ENCODE measurements at regions of chr5 and their contacts with region 1.

Region 1: GRCh38 chr5:170183816-170184687 is 48.7 kb upstream of the C5orf58 start:
- DNase-seq: peak; percentile 76
- H3K4me3 Mint-ChIP-seq: no peak overlapping the region
- H3K27ac Mint-ChIP-seq: no peak overlapping the region
- H3K4me1 Mint-ChIP-seq: no peaks in the 10 kb centered on the region
- H3K27me3 Mint-ChIP-seq: no peaks in the 10 kb centered on the region

Region 2: GRCh38 chr5:168987543-168988300 is 1196.3 kb before region 1 on chr5:
- CTCF ChIA-PET with region 1: no interaction called
- intact Hi-C with region 1: loop called (anchors 10 kb)
- DNase-seq: peak; percentile 77
- H3K4me3 Mint-ChIP-seq: no peak overlapping the region
- H3K27ac Mint-ChIP-seq: no peak overlapping the region
- H3K4me1 Mint-ChIP-seq: no peaks in the 10 kb centered on the region
- H3K27me3 Mint-ChIP-seq: peaks cover 6% of the 10 kb centered on the region

Region 3: GRCh38 chr5:170100066-170100943 is 83.7 kb before region 1 on chr5:
- CTCF ChIA-PET with region 1: interaction called, 32 read pairs
- intact Hi-C with region 1: loop called (anchors 1 kb)
- DNase-seq: peak; percentile 88
- H3K4me3 Mint-ChIP-seq: no peak overlapping the region
- H3K27ac Mint-ChIP-seq: no peak overlapping the region
- H3K4me1 Mint-ChIP-seq: no peaks in the 10 kb centered on the region
- H3K27me3 Mint-ChIP-seq: peaks cover 2% of the 10 kb centered on the region

Region 4: GRCh38 chr5:170173235-170173634 is 10.8 kb before region 1 on chr5:
- CTCF ChIA-PET with region 1: interaction called, 10 read pairs
- intact Hi-C with region 1: no loop called
- DNase-seq: no peak
- H3K4me3 Mint-ChIP-seq: no peak overlapping the region
- H3K27ac Mint-ChIP-seq: no peak overlapping the region
- H3K4me1 Mint-ChIP-seq: no peaks in the 10 kb centered on the region
- H3K27me3 Mint-ChIP-seq: no peaks in the 10 kb centered on the region

Region 5: GRCh38 chr5:170195961-170196360 is 11.9 kb after region 1 on chr5:
- CTCF ChIA-PET with region 1: interaction called, 18 read pairs
- intact Hi-C with region 1: no loop called
- DNase-seq: no peak
- H3K4me3 Mint-ChIP-seq: no peak overlapping the region
- H3K27ac Mint-ChIP-seq: no peak overlapping the region
- H3K4me1 Mint-ChIP-seq: no peaks in the 10 kb centered on the region
- H3K27me3 Mint-ChIP-seq: no peaks in the 10 kb centered on the region

Measured in activated naive CD4-positive, alpha-beta T cell treated with anti-CD3 and anti-CD28 coated beads for 36 hours (primary cell).